Activated CD8-positive, alpha-beta T cell treated with anti-CD3 and anti-CD28 coated beads, Interleukin-2, amount 10 ng/mL, durations not matched to agents 7 days and 5 days (primary cell): ENCODE measurements at regions of chr11 and their contacts with region 1.

Region 1: GRCh38 chr11:8263769-8264410 is at the start of gene LMO1:
- DNase-seq: peak; percentile 81
- ATAC-seq: peak; percentile 74
- H3K4me3 Mint-ChIP-seq: no peak within 1 kb of the TSS
- H3K27ac Mint-ChIP-seq: no peak within 1 kb of the TSS
- H3K4me1 Mint-ChIP-seq: peaks cover 6% of the 10 kb centered on the region
- H3K27me3 Mint-ChIP-seq: peaks cover 62% of the 10 kb centered on the region
- total RNA-seq, gene LMO1: not detected

Region 2: DNA sequence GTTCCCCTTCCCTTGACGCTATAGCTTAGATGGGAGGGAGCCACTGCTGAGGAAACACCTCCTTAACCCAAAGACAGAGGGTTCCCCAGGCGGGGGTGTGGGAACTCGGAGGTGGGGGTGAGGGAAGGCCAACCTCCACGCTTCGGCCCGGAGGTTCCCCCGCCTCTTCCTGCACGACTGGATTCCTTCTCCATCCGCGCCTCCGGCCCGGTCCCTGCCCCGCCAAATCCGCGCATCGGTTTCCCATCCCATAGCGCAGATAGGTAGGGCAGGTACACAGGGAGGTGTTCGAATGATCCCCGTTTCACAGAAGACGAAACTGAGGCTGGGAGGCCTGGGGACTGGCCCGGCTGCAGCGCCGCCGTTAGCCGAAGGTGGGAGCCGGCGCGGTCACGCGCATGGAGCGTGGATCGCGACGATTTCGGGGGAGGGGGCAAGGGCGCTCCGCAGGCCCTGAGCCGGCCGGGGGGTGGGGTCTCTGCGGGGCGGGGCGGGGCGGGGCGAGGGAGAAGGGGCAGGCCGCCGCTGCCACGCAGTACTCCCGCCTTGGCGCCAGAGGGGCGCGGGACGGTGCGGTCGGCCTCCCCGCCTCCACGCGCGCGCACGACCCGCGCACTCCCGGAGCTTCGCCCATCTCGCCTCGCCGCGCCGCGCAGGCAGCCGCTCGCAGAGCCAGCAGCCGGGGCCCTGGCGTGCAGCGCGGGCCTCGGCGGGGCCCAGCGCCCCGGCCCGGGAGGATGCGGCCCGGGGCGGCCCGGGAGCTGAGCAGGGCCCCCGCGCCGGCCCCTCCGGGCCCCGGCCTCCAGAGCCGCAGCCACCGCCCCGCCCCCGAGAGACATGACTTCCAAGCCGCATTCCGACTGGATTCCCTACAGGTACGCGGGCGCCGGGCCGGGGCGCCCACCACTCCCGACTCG is 183.0 kb before region 1 on chr11 and contains the start of gene TUB:
- CTCF ChIA-PET with region 1: no interaction called
- POLR2A ChIA-PET with region 1: no interaction called
- DNase-seq: no peak
- ATAC-seq: peak; percentile 63
- H3K4me3 Mint-ChIP-seq: peak within 1 kb of the TSS; percentile 26
- H3K27ac Mint-ChIP-seq: no peak within 1 kb of the TSS
- H3K4me1 Mint-ChIP-seq: peaks cover 3% of the 10 kb centered on the region
- H3K27me3 Mint-ChIP-seq: peaks cover 50% of the 10 kb centered on the region
- total RNA-seq, gene TUB: not detected

Region 3: GRCh38 chr11:8192016-8192895 is 71.6 kb before region 1 on chr11:
- CTCF ChIA-PET with region 1: interaction called, 11 read pairs
- POLR2A ChIA-PET with region 1: no interaction called
- DNase-seq: peak; percentile 58
- ATAC-seq: peak; percentile 70
- H3K4me3 Mint-ChIP-seq: no peak overlapping the region
- H3K27ac Mint-ChIP-seq: no peak overlapping the region
- H3K4me1 Mint-ChIP-seq: no peaks in the 10 kb centered on the region
- H3K27me3 Mint-ChIP-seq: peaks cover 7% of the 10 kb centered on the region

Region 4: GRCh38 chr11:8229299-8230177 is 34.4 kb before region 1 on chr11:
- CTCF ChIA-PET with region 1: interaction called, 14 read pairs
- POLR2A ChIA-PET with region 1: no interaction called
- DNase-seq: no peak
- ATAC-seq: no peak
- H3K4me3 Mint-ChIP-seq: no peak overlapping the region
- H3K27ac Mint-ChIP-seq: no peak overlapping the region
- H3K4me1 Mint-ChIP-seq: no peaks in the 10 kb centered on the region
- H3K27me3 Mint-ChIP-seq: no peaks in the 10 kb centered on the region

Region 5: GRCh38 chr11:8250392-8250791 is 13.5 kb before region 1 on chr11:
- CTCF ChIA-PET with region 1: interaction called, 15 read pairs
- POLR2A ChIA-PET with region 1: no interaction called
- DNase-seq: no peak
- ATAC-seq: no peak
- H3K4me3 Mint-ChIP-seq: no peak overlapping the region
- H3K27ac Mint-ChIP-seq: no peak overlapping the region
- H3K4me1 Mint-ChIP-seq: no peaks in the 10 kb centered on the region
- H3K27me3 Mint-ChIP-seq: peaks cover 3% of the 10 kb centered on the region

Region 6: DNA sequence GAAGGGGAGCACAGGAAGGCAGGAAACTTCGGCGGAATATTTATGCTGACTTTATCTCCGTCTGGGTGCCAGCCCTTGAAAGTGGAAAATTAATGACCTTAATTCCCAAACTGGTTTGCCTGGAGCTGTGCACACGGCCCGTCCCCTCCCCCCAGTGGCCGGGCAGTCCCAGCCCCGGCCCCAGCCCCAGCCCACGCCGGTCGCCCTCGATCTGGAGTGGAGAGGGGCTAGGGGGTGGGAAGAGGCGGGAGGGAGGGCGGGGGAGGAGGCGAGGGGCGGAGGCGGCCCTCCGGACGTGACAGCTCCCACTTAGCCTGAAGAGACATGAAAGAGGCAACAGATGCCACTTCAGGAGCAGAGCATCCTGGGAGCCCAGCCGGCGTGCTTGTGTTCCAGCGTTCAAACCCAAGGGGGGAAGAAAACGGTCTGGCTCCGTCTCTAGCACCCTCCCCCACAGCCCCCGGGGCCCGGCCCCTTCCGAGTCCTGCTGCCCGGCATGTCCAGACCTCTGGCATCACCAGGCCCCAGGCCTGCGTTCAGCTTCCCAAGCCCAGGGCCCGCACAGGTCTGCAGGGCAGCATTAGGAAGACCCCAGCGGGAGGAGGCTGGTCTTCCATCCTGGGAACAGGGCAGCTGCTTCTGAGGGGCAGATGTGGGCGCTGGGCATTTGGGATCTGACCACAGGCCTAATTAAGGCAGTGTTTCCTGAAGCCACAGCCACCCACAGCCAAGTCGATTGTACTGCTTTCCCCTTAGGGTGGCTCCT is 19.8 kb after region 1 on chr11:
- CTCF ChIA-PET with region 1: interaction called, 10 read pairs
- POLR2A ChIA-PET with region 1: no interaction called
- DNase-seq: no peak
- ATAC-seq: no peak
- H3K4me3 Mint-ChIP-seq: no peak overlapping the region
- H3K27ac Mint-ChIP-seq: no peak overlapping the region
- H3K4me1 Mint-ChIP-seq: no peaks in the 10 kb centered on the region
- H3K27me3 Mint-ChIP-seq: peaks cover 7% of the 10 kb centered on the region

Region 7: DNA sequence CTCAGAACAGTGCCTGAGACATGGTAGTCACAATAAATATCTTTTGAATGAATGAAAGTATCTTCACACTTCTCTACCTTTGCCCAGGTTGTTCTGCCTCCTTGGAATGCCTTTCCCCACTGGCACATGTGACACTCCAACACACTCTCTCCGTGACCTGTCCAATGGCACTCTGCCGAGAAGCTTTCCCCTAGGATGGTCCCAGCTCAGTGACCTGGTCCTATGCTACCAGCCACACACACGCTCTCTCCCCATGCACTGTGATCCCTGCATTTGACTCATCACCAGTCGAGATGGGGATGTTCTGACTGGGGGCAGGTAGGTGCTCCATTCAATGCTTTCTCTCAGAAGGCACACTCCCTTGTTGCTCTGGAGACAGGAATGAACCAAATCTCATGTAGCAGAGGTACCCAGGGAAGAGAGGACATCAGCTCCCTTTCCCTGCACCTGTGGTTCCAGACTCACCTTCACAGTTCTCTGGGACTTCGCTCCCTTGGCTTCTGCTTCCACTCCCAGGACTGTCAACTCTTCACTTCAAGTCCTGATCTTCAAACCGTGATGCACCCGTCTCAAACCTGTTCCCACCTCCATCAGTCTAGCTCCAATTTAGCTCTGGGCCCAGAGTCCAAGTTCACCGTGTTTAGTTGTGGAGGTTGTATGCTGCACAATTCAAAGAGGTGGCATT is 30.5 kb after region 1 on chr11:
- CTCF ChIA-PET with region 1: no interaction called
- POLR2A ChIA-PET with region 1: no interaction called
- DNase-seq: no peak
- ATAC-seq: no peak
- H3K4me3 Mint-ChIP-seq: no peak overlapping the region
- H3K27ac Mint-ChIP-seq: no peak overlapping the region
- H3K4me1 Mint-ChIP-seq: no peaks in the 10 kb centered on the region
- H3K27me3 Mint-ChIP-seq: no peaks in the 10 kb centered on the region

Region 8: GRCh38 chr11:8566613-8567210 is 302.8 kb after region 1 on chr11:
- CTCF ChIA-PET with region 1: interaction called, 11 read pairs
- POLR2A ChIA-PET with region 1: no interaction called
- DNase-seq: no peak
- ATAC-seq: no peak
- H3K4me3 Mint-ChIP-seq: no peak overlapping the region
- H3K27ac Mint-ChIP-seq: no peak overlapping the region
- H3K4me1 Mint-ChIP-seq: no peaks in the 10 kb centered on the region
- H3K27me3 Mint-ChIP-seq: peaks cover 30% of the 10 kb centered on the region